ENCODE measurements at regions of chr17 and their contacts with region 1.

Region 1: DNA sequence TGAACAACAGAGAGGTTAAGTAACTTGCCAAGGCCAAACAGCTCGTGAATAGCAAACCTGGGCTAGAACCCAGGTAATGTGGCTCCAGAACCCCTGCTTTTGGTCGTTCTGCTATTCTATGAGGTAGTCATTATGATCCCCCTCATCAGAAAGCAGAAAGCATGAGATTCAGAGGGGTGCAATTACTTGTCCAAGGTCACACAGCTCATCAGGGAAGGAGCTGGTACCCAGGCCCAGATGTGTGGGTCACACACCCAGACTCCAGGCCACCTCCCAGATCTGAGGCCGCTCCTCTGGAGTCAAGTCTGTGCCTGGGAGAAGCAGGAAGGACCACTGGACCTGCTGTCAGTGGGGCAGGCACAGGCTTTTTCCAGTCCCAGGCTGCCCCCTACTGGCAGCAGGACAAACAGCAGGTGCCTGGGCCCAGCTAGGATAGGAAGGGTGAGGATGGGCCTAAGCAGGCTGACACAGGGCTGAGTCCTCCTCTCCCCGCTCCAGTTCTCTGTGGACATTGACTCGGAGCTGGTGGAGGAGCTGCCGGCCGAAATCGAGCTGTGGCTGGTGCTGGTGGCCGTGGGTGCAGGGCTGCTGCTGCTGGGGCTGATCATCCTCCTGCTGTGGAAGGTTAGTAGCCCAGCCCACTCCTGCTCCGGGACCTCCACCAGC is 7.8 kb upstream of the PDK2 start:
- DNase-seq: peak; percentile 89
- ATAC-seq: peak; percentile 96
- H3K4me3 Mint-ChIP-seq: no peak overlapping the region
- H3K27ac Mint-ChIP-seq: no peak overlapping the region
- H3K4me1 Mint-ChIP-seq: no peaks in the 10 kb centered on the region
- H3K27me3 Mint-ChIP-seq: no peaks in the 10 kb centered on the region
- CTCF ChIP-seq: peak; percentile 99

Region 2: DNA sequence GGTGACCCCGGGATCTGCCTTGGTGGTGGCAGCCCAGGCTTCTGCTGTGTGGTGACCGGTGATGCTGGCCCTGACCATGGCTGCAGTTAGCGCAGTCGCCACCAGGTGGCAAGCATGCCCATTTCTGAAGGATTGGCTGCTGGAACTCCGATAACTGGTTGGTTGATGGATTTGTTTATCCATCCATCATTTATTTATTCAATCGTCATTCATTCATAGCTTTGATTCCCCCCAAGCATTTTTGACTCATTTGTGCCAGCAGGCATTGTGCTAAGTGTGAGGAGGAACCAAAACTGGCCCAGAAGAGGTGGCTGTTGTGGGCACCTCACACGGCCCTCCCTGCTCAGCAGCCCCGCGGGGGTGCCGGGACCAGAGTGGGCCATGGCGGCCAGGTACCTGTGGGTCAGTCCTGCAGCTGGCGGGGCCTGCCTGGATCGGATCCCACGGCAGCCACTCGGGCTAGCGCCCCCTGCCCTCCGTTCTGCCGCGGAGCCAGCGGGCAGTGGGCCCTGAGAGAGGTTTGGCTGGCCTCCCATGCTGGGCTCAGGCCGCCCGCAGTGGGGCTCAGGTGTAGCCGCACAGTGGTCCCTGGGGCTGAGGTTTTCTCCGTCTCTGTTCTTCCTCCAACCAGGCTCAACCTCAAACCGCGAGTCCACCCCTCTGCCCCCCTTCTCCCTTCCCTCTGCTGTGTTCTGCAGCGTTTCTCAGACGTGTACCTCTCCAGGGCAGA is 60.3 kb before region 1 on chr17:
- CTCF ChIA-PET with region 1: interaction called, 71 read pairs
- POLR2A ChIA-PET with region 1: no interaction called
- DNase-seq: peak; percentile 92
- ATAC-seq: peak; percentile 67
- H3K4me3 Mint-ChIP-seq: peak overlapping the region; percentile 53
- H3K27ac Mint-ChIP-seq: no peak overlapping the region
- H3K4me1 Mint-ChIP-seq: peaks cover 25% of the 10 kb centered on the region
- H3K27me3 Mint-ChIP-seq: peaks cover 11% of the 10 kb centered on the region
- CTCF ChIP-seq: peak; percentile 92

Region 3: DNA sequence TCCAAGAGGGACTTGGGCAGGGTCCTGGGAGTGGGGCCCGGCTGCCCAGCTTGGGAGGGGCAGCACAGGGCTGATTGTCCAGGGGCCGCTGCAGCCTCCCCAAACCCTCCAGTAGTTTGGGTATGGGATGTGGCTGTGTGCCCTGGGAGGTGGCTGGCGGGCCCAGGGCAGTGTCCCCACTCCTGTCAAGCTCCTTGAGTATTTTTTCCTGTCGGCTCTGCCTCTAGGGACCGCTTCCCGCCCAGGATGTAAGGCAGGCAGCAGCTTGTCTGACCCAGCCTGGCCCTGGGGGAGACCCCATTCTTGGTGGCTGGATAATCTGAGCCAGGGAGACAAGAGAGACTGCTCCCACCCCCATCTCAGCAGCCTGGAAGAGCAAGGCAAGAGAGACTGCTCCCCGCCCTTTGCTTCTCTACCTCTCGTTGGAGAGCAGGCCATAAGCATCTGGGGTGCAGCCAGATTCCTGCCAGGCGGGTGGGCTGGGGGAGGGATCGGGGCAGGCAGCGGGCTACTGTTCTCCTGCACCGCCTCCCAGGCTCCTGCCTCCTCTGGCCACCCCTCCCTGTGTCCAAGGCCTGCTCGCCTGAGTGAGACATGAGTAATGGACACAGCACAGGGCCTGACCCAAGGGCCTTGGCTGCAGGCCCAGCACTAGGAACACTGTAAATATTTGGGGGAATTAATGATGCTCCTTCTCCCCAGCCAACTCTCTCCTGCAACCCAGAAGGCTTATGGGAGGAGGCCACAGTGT is 49.9 kb before region 1 on chr17:
- CTCF ChIA-PET with region 1: interaction called, 71 read pairs
- POLR2A ChIA-PET with region 1: no interaction called
- DNase-seq: no peak
- ATAC-seq: peak; percentile 23
- H3K4me3 Mint-ChIP-seq: no peak overlapping the region
- H3K27ac Mint-ChIP-seq: no peak overlapping the region
- H3K4me1 Mint-ChIP-seq: peaks cover 11% of the 10 kb centered on the region
- H3K27me3 Mint-ChIP-seq: peaks cover 5% of the 10 kb centered on the region
- CTCF ChIP-seq: no peak

Measured in WTC11 (cell line).